ENCODE measurements at regions of chr10 and their contacts with region 1.

Region 1: GRCh38 chr10:28201410-28202400 is 101.2 kb downstream of the MPP7 start:
- DNase-seq: no peak
- ATAC-seq: no peak
- H3K4me3 ChIP-seq: no peak overlapping the region
- H3K4me3 Mint-ChIP-seq: no peak overlapping the region
- H3K27ac ChIP-seq: no peak overlapping the region
- H3K27ac Mint-ChIP-seq: no peak overlapping the region
- H3K4me1 ChIP-seq: no peaks in the 10 kb centered on the region
- H3K4me1 Mint-ChIP-seq: peaks cover 9% of the 10 kb centered on the region
- H3K27me3 ChIP-seq: no peaks in the 10 kb centered on the region
- H3K27me3 Mint-ChIP-seq: no peaks in the 10 kb centered on the region
- CTCF ChIP-seq: no peak

Region 2: GRCh38 chr10:27083063-27083462 is 1118.6 kb before region 1 on chr10:
- CTCF ChIA-PET with region 1: no interaction called
- POLR2A ChIA-PET with region 1: no interaction called
- intact Hi-C with region 1: no loop called
- DNase-seq: no peak
- ATAC-seq: no peak
- H3K4me3 ChIP-seq: no peak overlapping the region
- H3K4me3 Mint-ChIP-seq: no peak overlapping the region
- H3K27ac ChIP-seq: no peak overlapping the region
- H3K27ac Mint-ChIP-seq: no peak overlapping the region
- H3K4me1 ChIP-seq: no peaks in the 10 kb centered on the region
- H3K4me1 Mint-ChIP-seq: no peaks in the 10 kb centered on the region
- H3K27me3 ChIP-seq: no peaks in the 10 kb centered on the region
- H3K27me3 Mint-ChIP-seq: no peaks in the 10 kb centered on the region
- CTCF ChIP-seq: no peak

Region 3: GRCh38 chr10:28184810-28185209 is 16.9 kb before region 1 on chr10:
- CTCF ChIA-PET with region 1: no interaction called
- POLR2A ChIA-PET with region 1: no interaction called
- intact Hi-C with region 1: loop called in 1 of 2 experiments (anchors 1 kb)
- DNase-seq: no peak
- ATAC-seq: no peak
- H3K4me3 ChIP-seq: no peak overlapping the region
- H3K4me3 Mint-ChIP-seq: no peak overlapping the region
- H3K27ac ChIP-seq: no peak overlapping the region
- H3K27ac Mint-ChIP-seq: no peak overlapping the region
- H3K4me1 ChIP-seq: no peaks in the 10 kb centered on the region
- H3K4me1 Mint-ChIP-seq: peaks cover 16% of the 10 kb centered on the region
- H3K27me3 ChIP-seq: no peaks in the 10 kb centered on the region
- H3K27me3 Mint-ChIP-seq: no peaks in the 10 kb centered on the region
- CTCF ChIP-seq: no peak

Region 4: GRCh38 chr10:28217848-28218247 is 16.1 kb after region 1 on chr10:
- CTCF ChIA-PET with region 1: no interaction called
- POLR2A ChIA-PET with region 1: no interaction called
- intact Hi-C with region 1: no loop called
- DNase-seq: peak in 1 of 9 experiments; percentile 12
- ATAC-seq: peak; percentile 44
- H3K4me3 ChIP-seq: no peak overlapping the region
- H3K4me3 Mint-ChIP-seq: no peak overlapping the region
- H3K27ac ChIP-seq: no peak overlapping the region
- H3K27ac Mint-ChIP-seq: no peak overlapping the region
- H3K4me1 ChIP-seq: peaks cover 13% of the 10 kb centered on the region
- H3K4me1 Mint-ChIP-seq: peaks cover 53% of the 10 kb centered on the region
- H3K27me3 ChIP-seq: no peaks in the 10 kb centered on the region
- H3K27me3 Mint-ChIP-seq: no peaks in the 10 kb centered on the region
- CTCF ChIP-seq: no peak

Measured in CD8-positive, alpha-beta T cell (primary cell).